ENCODE measurements at regions of chr5 and their contacts with region 1.

Region 1: GRCh38 chr5:134845852-134846640 is at the start of gene C5orf24:
- DNase-seq: peak; percentile 90 to 94
- ATAC-seq: peak; percentile 96
- H3K4me3 ChIP-seq: peak within 1 kb of the TSS; percentile 85 to 89 (median 86)
- H3K27ac ChIP-seq: peak within 1 kb of the TSS; percentile 93 to 99 (median 95)
- H3K4me1 ChIP-seq: peaks cover 15 to 17% of the 10 kb centered on the region in 2 donors
- H3K27me3 ChIP-seq: no peaks in the 10 kb centered on the region
- CTCF ChIP-seq: no peak
- POLR2A ChIP-seq: peak; percentile 95 to 96
- total RNA-seq, gene C5orf24: 17.3 to 32.8 (median 23.4) TPM

Region 2: GRCh38 chr5:134769206-134769605 is 76.8 kb before region 1 on chr5:
- in situ Hi-C with region 1: no loop called
- intact Hi-C with region 1: loop called (anchors 2 kb)
- DNase-seq: no peak
- ATAC-seq: no peak
- H3K4me3 ChIP-seq: no peak overlapping the region
- H3K27ac ChIP-seq: no peak overlapping the region
- H3K4me1 ChIP-seq: no peaks in the 10 kb centered on the region
- H3K27me3 ChIP-seq: no peaks in the 10 kb centered on the region
- CTCF ChIP-seq: no peak
- POLR2A ChIP-seq: no peak

Region 3: DNA sequence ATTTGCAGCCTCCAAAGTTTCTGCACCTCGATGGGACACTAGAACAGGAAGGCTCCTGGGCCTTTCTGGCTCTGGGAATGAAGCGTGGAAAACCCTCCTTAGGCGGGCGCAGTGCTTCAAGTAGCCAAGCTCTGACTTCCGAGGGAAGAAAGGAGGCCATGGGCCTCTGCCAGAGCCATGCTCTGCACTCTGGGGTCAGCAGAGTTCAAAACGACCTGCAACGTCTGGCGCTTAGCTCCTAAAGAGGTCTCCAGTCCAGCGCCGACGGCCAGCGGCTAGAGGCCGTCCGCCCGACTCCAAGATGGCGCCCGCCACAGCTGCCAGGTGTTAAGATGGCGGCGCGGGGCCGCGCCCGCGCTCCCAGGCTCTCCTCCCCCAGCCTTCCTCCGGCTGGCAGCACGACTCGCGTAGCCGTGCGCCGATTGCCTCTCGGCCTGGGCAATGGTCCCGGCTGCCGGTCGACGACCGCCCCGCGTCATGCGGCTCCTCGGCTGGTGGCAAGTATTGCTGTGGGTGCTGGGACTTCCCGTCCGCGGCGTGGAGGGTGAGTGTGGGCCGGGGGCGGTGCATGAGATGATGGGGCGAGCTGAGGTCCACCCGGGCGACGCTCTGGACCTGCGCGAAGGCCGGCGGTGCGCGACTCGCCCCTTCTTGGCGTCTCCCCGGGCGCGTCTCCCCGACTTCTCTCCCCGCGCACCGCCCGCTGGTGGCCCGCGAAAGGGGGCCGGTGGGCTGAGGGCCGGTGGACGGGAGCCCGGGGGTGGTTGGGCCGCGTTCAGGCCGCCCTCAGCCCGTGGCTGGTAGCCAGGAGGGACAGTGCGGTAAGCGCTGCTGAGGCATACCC is 28.2 kb after region 1 on chr5 and contains the start of gene TXNDC15:
- in situ Hi-C with region 1: no loop called
- intact Hi-C with region 1: loop called (anchors 1 kb)
- DNase-seq: peak; percentile 79 to 85
- ATAC-seq: peak; percentile 89 to 91
- H3K4me3 ChIP-seq: peak within 1 kb of the TSS; percentile 92 to 98 (median 95)
- H3K27ac ChIP-seq: peak within 1 kb of the TSS; percentile 95 to 99 (median 96)
- H3K4me1 ChIP-seq: peaks cover 17 to 19% of the 10 kb centered on the region in 2 donors
- H3K27me3 ChIP-seq: no peaks in the 10 kb centered on the region
- CTCF ChIP-seq: no peak
- POLR2A ChIP-seq: peak in 1 of 2 donors; percentile 38
- total RNA-seq, gene TXNDC15: 37.0 to 81.1 (median 59.6) TPM

Region 4: DNA sequence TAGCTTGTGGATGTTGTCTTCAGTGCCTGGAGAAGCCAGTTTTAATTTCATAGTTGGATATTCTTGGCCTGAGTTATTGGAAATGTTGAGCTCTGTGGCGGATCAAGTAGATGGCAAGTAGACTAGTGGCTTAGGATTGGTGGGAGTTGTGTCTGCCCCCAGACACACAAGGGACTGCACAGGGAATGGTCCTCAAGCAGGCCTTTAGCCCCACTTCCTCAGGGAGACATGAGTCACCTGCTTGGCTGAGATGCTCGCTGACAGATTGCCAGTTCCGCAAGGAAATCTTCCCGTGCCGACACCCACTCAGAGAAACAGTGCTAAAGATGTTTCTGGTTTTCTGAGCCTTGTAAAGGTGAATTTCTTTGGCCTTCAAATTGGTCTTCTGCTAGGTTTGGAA is 102.9 kb after region 1 on chr5:
- in situ Hi-C with region 1: no loop called
- intact Hi-C with region 1: no loop called
- DNase-seq: peak; percentile 43 to 65
- ATAC-seq: peak; percentile 94 to 95
- H3K4me3 ChIP-seq: no peak overlapping the region
- H3K27ac ChIP-seq: peak overlapping the region; percentile 59 to 66 (median 60)
- H3K4me1 ChIP-seq: peaks cover 22 to 29% of the 10 kb centered on the region in 2 donors
- H3K27me3 ChIP-seq: no peaks in the 10 kb centered on the region
- CTCF ChIP-seq: no peak
- POLR2A ChIP-seq: no peak

Region 5: GRCh38 chr5:135139381-135140137 is 293.5 kb after region 1 on chr5:
- in situ Hi-C with region 1: no loop called
- intact Hi-C with region 1: no loop called
- DNase-seq: no peak
- ATAC-seq: peak; percentile 21 to 60
- H3K4me3 ChIP-seq: no peak overlapping the region
- H3K27ac ChIP-seq: no peak overlapping the region
- H3K4me1 ChIP-seq: no peaks in the 10 kb centered on the region
- H3K27me3 ChIP-seq: no peaks in the 10 kb centered on the region
- CTCF ChIP-seq: no peak
- POLR2A ChIP-seq: no peak